ENCODE measurements at regions of chr2 and their contacts with region 1.

Region 1: DNA sequence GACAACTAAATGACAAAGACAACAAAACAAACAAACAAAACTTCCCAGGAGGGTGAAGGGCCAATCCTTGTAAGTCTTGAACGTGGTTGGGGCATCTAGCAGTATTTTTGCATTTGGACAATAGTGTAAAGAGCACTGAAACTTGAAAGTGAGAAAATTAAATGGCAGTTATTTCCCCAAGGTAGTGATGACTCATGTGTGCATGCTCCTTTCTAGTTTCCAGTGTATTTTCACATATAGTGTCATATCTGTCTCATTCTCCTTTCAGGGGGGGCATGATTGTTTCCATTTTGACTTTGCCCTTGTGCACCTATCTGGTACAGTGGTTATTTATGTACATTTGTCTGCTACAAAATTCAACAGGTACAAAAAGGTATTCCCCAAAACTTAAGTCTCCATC is 39.5 kb downstream of the CERS6 start:
- DNase-seq: no peak
- H3K4me3 Mint-ChIP-seq: no peak overlapping the region
- H3K27ac Mint-ChIP-seq: no peak overlapping the region
- H3K4me1 Mint-ChIP-seq: peaks cover 39% of the 10 kb centered on the region
- H3K27me3 Mint-ChIP-seq: peaks cover 7% of the 10 kb centered on the region

Region 2: DNA sequence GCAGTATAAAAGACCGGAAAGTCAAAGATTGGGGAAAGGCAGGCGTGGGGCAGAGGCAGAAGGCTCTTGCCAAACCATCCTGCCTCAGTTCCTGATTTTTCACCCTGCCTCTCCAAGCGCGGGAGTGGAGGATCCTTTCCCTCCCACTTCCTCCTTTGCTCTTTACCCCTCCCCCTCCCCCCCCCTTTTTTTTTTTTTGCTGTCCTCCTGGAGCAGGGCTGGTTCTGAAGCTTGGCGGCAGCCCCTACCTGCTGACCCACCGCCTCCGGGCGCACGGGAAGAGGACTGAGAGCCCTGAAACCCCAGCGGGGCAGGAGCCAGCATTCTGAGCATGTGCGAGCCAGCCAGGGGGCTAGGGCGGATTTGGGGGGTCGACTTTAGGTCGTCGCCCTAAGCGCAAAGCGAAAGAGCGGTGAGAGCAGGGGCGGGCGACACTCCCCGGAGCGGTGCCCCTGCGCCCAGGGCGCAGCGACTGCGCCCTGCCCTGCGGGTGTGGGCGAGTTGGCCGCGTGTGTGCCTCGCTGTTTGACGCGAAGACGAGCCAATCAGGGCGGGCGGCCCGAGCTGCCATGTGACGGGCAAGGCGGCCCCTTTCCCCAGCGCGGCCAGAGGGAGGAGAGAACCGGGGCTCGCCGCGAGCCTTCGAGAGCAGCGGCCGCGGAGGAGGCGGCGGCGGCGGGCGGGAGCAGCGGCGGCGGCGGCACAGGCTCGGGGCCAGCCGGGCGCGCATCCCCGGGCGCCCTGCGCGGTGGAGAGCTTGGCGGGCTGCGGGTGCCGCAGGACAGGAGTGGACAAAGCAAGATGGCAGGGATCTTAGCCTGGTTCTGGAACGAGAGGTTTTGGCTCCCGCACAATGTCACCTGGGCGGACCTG is 39.6 kb before region 1 on chr2 and contains the start of gene CERS6:
- CTCF ChIA-PET with region 1: no interaction called
- POLR2A ChIA-PET with region 1: interaction called, 8 read pairs
- intact Hi-C with region 1: loop called (anchors 1 kb)
- DNase-seq: peak; percentile 93
- H3K4me3 Mint-ChIP-seq: no peak within 1 kb of the TSS
- H3K27ac Mint-ChIP-seq: peak within 1 kb of the TSS; percentile 31
- H3K4me1 Mint-ChIP-seq: peaks cover 28% of the 10 kb centered on the region
- H3K27me3 Mint-ChIP-seq: no peaks in the 10 kb centered on the region
- total RNA-seq, gene CERS6: 8.9 to 9.2 TPM

Region 3: GRCh38 chr2:168632709-168633121 is 137.2 kb after region 1 on chr2:
- CTCF ChIA-PET with region 1: no interaction called
- POLR2A ChIA-PET with region 1: no interaction called
- intact Hi-C with region 1: no loop called
- DNase-seq: no peak
- H3K4me3 Mint-ChIP-seq: no peak overlapping the region
- H3K27ac Mint-ChIP-seq: no peak overlapping the region
- H3K4me1 Mint-ChIP-seq: peaks cover 3% of the 10 kb centered on the region
- H3K27me3 Mint-ChIP-seq: no peaks in the 10 kb centered on the region